ENCODE measurements at regions of chr19 and their contacts with region 1.

Region 1: GRCh38 chr19:8580710-8581281 is 3.6 kb upstream of the MYO1F start:
- DNase-seq: peak; percentile 53
- ATAC-seq: peak; percentile 79
- H3K4me3 ChIP-seq: no peak overlapping the region
- H3K27ac ChIP-seq: no peak overlapping the region
- H3K4me1 ChIP-seq: no peaks in the 10 kb centered on the region
- H3K27me3 ChIP-seq: no peaks in the 10 kb centered on the region
- CTCF ChIP-seq: peak; percentile 99

Region 2: DNA sequence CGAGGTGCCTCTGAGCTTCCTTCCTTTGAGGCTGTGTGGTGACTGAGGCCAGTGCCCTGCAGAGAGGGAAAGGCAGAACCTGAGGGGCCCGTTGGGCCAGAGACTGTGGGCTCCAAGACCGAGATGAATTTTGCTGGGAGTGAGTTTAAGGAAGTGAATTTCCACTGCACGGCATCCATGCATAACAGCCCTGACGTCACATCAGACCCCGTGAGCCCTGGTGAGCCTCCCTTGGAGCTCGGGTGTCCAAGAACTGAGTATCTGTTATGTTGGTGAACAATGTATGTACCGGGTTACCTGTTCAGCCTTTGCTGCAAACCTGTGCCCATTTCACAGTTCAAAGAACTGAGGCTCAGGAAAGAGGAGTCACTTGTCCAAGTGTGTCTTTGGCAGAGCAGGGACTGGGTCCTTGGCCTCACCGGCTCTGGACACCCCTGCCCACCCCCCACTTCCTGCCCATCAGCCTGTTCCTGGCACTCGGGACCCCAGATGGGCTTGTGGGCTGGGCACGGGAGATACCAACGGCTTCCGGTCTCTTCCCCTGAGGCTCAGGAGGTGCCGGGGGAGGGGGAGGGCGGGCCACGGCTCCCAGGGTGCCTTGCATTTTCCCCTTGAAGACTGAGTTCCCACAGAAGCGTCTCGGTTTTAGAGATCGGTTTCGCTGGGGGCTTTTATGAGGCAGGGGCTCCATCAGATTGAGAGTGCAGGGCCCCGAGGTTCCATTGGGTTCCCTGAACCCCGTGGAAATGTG is 83.3 kb after region 1 on chr19:
- CTCF ChIA-PET with region 1: no interaction called
- POLR2A ChIA-PET with region 1: no interaction called
- in situ Hi-C with region 1: no loop called
- intact Hi-C with region 1: no loop called
- DNase-seq: no peak
- ATAC-seq: no peak
- H3K4me3 ChIP-seq: no peak overlapping the region
- H3K27ac ChIP-seq: no peak overlapping the region
- H3K4me1 ChIP-seq: no peaks in the 10 kb centered on the region
- H3K27me3 ChIP-seq: no peaks in the 10 kb centered on the region
- CTCF ChIP-seq: no peak

Region 3: DNA sequence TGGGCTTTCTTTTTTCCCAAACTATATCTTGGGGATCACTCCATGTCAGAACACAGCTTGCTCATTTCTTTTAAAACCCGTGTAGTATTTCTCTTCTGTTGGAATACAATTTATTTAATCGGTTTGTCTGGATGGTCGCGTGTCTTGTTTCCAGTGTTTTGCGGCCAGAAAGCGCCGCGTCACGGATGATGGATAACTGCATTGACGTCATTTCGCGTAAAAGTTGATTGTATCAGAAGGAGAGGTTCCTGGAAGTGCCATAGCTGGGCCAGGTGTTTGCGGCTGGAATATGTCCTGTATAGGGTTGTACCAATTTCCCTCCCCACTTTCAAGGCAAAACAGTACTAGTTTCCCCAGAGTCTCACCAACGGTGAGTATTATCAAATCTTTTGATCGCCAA is 108.1 kb after region 1 on chr19:
- CTCF ChIA-PET with region 1: interaction called, 17 read pairs
- POLR2A ChIA-PET with region 1: no interaction called
- in situ Hi-C with region 1: no loop called
- intact Hi-C with region 1: no loop called
- DNase-seq: no peak
- ATAC-seq: no peak
- H3K4me3 ChIP-seq: no peak overlapping the region
- H3K27ac ChIP-seq: no peak overlapping the region
- H3K4me1 ChIP-seq: no peaks in the 10 kb centered on the region
- H3K27me3 ChIP-seq: no peaks in the 10 kb centered on the region
- CTCF ChIP-seq: no peak

Region 4: DNA sequence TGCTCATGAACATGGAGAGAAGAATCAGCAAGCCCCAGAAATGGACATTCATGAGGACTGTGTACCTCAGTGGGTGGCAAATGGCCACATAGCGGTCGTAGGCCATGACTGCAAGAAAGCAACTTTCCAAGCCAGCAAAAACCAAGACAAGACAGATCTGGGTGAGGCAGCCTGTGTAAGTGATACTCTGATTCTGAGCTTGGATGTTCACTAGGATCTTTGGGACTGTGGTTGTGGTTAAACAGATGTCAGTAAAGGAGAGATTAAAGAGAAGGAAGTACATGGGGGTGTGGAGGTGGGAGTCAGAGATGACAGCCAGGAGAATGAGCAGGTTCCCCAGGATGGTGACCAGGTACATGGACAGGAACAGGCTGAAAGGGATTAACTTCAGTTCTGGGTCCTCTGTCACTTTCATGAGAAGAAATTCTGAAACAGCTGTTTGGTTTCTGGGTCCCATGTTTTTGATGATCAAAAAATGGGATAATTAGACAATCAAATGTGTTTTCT is 534.6 kb after region 1 on chr19 and contains the start of gene OR7G1:
- CTCF ChIA-PET with region 1: no interaction called
- POLR2A ChIA-PET with region 1: no interaction called
- in situ Hi-C with region 1: no loop called
- intact Hi-C with region 1: no loop called
- DNase-seq: no peak
- ATAC-seq: no peak
- H3K4me3 ChIP-seq: no peak within 1 kb of the TSS
- H3K27ac ChIP-seq: no peak within 1 kb of the TSS
- H3K4me1 ChIP-seq: no peaks in the 10 kb centered on the region
- H3K27me3 ChIP-seq: no peaks in the 10 kb centered on the region
- CTCF ChIP-seq: no peak
- total RNA-seq, gene OR7G1: not detected

Region 5: GRCh38 chr19:9768175-9769112 is 1187.6 kb after region 1 on chr19 and contains the start of gene ZNF846:
- CTCF ChIA-PET with region 1: interaction called, 10 read pairs
- POLR2A ChIA-PET with region 1: no interaction called
- in situ Hi-C with region 1: no loop called
- intact Hi-C with region 1: no loop called
- DNase-seq: peak; percentile 79
- ATAC-seq: peak; percentile 100
- H3K4me3 ChIP-seq: peak within 1 kb of the TSS; percentile 80 to 89
- H3K27ac ChIP-seq: peak within 1 kb of the TSS; percentile 93
- H3K4me1 ChIP-seq: no peaks in the 10 kb centered on the region; the same call in 1 of the 2 replicates
- H3K27me3 ChIP-seq: no peaks in the 10 kb centered on the region
- CTCF ChIP-seq: no peak
- total RNA-seq, gene ZNF846: 10.2 TPM